B cell (primary cell): ENCODE measurements at regions of chr22 and their contacts with region 1.

Region 1: DNA sequence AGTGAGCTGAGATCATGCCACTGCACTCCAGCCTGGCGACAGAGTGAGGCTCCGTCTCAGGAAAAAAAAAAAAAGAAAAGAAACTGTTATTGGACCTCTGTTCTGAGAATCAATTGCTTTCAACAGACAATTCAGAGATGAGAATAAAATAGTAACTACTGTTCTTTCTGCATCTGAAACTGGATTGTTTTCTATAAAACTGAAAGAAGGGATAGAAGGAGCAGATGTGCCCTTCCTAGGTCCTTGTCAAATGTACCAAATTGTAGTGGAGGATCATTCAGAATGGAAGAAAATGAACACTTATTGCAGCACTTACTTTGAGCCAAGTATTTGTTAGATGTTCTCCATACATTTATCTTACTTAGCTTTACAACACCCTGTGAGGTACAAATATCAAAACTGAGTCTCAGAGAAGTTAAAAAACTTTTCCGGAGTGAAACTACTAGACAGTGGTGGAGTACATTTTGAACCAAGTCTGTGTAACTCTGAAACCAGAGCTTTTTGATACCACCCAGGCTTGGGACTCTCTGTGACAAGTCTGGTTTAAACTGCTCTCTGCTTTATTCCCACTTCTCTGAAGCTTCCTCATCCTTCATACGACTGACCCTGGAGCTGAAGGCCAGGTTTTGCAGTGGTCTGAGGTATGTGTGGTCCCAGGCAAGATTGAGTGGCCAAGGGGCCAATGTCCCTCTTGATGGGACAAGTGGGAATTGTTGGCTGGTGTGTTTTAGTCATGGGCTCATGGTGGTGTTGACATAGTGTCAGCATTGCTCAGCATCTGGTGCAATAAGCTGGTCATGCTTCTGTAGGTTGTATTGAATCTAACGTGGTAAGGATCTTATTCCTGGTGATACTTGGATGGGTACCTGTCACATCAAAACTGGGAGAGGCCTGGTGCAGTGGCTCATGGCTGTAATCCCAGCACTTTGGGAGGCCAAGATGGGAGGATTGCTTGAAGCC is 48.2 kb upstream of the CCDC134 start:
- DNase-seq: no peak
- ATAC-seq: no peak
- H3K4me3 ChIP-seq: no peak overlapping the region
- H3K4me3 Mint-ChIP-seq: no peak overlapping the region
- H3K27ac ChIP-seq: no peak overlapping the region
- H3K27ac Mint-ChIP-seq: peak overlapping the region; percentile 4
- H3K4me1 ChIP-seq: peaks cover 8 to 17% of the 10 kb centered on the region in 2 donors
- H3K4me1 Mint-ChIP-seq: peaks cover 18% of the 10 kb centered on the region
- H3K27me3 ChIP-seq: peaks cover 0 to 3% (median 0%) of the 10 kb centered on the region in 4 experiments
- H3K27me3 Mint-ChIP-seq: no peaks in the 10 kb centered on the region
- CTCF ChIP-seq: no peak

Region 2: DNA sequence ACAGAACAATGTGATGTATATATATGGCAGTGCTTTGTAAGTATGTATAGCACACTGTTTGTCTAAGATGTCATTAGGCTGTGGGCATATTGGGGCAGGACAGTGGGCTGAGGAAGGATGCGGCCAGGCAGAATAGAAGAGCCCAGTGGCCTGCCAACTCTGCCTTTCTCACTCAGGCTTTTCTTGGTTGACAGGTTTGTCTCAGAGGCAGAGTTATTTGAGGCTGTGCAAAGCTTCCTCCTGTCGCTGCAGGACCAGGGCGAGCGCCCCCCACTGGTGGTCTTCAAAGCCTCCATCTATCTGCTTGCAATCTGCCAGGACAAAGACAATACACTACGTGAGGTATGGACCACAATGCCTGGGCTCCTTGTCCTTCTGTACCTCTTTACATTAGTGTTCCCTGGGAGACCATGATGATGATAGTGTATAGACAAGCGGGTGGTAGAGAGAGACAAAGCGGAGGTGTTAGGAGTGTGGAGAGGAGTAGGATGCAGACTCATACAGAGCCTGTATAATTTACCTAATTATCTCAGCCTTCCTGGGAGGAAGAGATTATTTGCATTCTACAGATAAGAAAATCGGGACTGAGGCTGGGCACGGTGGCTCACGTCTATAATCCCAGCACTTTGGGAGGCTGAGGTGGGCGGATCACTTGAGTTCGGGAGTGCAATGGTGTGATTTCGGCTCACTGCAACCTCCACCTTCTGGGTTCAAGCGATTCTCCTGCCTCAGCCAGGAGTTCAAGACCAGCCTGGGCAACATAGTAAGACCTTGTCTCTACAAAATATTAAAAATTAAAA is 10.9 kb after region 1 on chr22:
- CTCF ChIA-PET with region 1: interaction called, 14 read pairs
- POLR2A ChIA-PET with region 1: no interaction called
- intact Hi-C with region 1: no loop called
- DNase-seq: peak; percentile 60
- ATAC-seq: peak; percentile 47
- H3K4me3 ChIP-seq: no peak overlapping the region
- H3K4me3 Mint-ChIP-seq: no peak overlapping the region
- H3K27ac ChIP-seq: no peak overlapping the region
- H3K27ac Mint-ChIP-seq: no peak overlapping the region
- H3K4me1 ChIP-seq: no peaks in the 10 kb centered on the region
- H3K4me1 Mint-ChIP-seq: peaks cover 6% of the 10 kb centered on the region
- H3K27me3 ChIP-seq: no peaks in the 10 kb centered on the region
- H3K27me3 Mint-ChIP-seq: no peaks in the 10 kb centered on the region
- CTCF ChIP-seq: peak; percentile 68